A673 (cell line): ENCODE measurements at regions of chr1 and their contacts with region 1.

Region 1: GRCh38 chr1:153827168-153827964 is 52.2 kb downstream of the SLC27A3 start:
- DNase-seq: no peak
- H3K4me3 ChIP-seq: no peak overlapping the region
- H3K27ac ChIP-seq: no peak overlapping the region
- H3K4me1 ChIP-seq: no peaks in the 10 kb centered on the region
- H3K27me3 ChIP-seq: no peaks in the 10 kb centered on the region
- CTCF ChIP-seq: peak; percentile 44; the same call in 1 of the 2 replicates

Region 2: GRCh38 chr1:153768316-153769181 is 58.8 kb before region 1 on chr1:
- CTCF ChIA-PET with region 1: no interaction called
- POLR2A ChIA-PET with region 1: interaction called, 11 read pairs
- intact Hi-C with region 1: no loop called
- DNase-seq: no peak
- H3K4me3 ChIP-seq: no peak overlapping the region
- H3K27ac ChIP-seq: no peak overlapping the region
- H3K4me1 ChIP-seq: no peaks in the 10 kb centered on the region
- H3K27me3 ChIP-seq: no peaks in the 10 kb centered on the region
- CTCF ChIP-seq: no peak

Region 3: DNA sequence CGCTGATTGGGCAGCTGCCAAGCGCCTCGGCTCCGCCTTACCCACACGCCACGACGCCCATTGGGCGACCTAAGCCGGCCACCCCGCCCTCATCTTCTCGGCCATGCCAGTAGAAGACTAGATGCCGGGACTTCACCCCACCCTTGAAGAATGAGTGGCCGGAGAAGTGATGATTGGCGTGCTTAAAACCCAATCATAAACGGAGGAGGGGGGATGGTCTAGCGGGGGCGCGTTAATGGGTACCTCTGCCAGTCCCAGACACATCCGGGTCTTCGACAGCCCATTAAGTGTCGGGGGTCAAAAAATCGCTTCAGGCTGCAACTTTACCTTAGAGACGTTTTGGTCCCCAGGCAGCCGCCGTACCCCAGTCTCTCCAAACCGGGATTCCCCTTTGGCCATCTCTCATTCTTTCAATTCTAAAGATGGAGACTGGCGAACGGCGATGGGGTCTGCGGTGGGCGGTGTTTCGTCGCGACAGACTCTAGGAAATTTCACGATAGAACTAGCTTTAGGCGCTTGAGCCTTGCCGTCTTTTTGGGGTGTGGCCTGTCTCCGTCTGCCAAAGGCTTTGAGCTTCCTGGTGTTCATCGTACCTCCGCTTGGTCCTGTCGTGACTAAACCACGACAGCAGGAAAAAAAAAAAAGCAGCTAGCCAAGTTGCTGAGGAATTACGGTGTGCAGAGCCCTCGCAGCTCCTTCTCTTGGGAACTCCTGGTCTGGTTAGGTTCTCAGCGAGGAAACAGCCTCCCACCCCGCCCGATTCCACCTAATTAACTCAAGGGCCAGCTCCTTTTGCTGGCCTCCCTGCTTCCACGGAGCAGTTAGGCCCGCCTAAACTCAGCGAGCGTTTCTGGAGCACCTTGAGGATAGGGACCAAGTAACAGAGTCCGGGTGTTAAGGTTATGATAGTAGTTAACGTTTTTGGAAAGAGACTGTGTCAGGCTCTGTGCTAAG is 95.9 kb after region 1 on chr1 and contains the start of gene GATAD2B:
- CTCF ChIA-PET with region 1: interaction called, 4 read pairs
- POLR2A ChIA-PET with region 1: no interaction called
- intact Hi-C with region 1: loop called (anchors 5 kb)
- DNase-seq: peak; percentile 100
- H3K4me3 ChIP-seq: peak within 1 kb of the TSS; percentile 75
- H3K27ac ChIP-seq: peak within 1 kb of the TSS; percentile 77
- H3K4me1 ChIP-seq: peaks cover 31% of the 10 kb centered on the region
- H3K27me3 ChIP-seq: no peaks in the 10 kb centered on the region
- CTCF ChIP-seq: no peak
- total RNA-seq, gene GATAD2B: 58.8 and 67.3 TPM in 2 replicates

Region 4: GRCh38 chr1:154000420-154000819 is 173.1 kb after region 1 on chr1:
- CTCF ChIA-PET with region 1: no interaction called
- POLR2A ChIA-PET with region 1: no interaction called
- intact Hi-C with region 1: no loop called
- DNase-seq: no peak
- H3K4me3 ChIP-seq: no peak overlapping the region
- H3K27ac ChIP-seq: no peak overlapping the region
- H3K4me1 ChIP-seq: no peaks in the 10 kb centered on the region
- H3K27me3 ChIP-seq: no peaks in the 10 kb centered on the region
- CTCF ChIP-seq: no peak